ENCODE measurements at regions of chr21 and their contacts with region 1.

Region 1: DNA sequence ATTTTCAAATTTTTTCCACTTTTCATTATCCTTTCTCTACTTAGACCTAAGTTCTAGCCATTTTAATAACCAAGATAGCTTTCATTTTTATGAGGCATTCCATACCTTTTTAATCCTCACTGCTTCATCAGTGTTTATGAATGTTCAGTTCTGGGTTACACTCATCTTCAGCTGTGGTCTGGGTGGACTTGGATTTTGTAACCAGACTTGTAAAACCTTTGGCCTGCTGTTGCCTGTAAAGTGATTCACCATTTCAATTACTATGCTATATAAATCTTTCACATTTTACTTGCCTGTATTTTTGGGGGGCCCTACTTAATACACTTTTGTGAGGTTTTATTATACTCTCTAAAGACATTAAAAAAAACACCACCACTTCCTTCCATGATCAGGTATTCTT is 46.2 kb downstream of the USP25 start:
- DNase-seq: no peak
- ATAC-seq: no peak
- H3K4me3 Mint-ChIP-seq: no peak overlapping the region
- H3K27ac Mint-ChIP-seq: no peak overlapping the region
- H3K4me1 Mint-ChIP-seq: peaks cover 20% of the 10 kb centered on the region
- H3K27me3 Mint-ChIP-seq: no peaks in the 10 kb centered on the region
- CTCF ChIP-seq: no peak

Region 2: GRCh38 chr21:15809818-15810217 is 33.8 kb after region 1 on chr21:
- CTCF ChIA-PET with region 1: no interaction called
- POLR2A ChIA-PET with region 1: no interaction called
- intact Hi-C with region 1: loop called (anchors 5 kb)
- DNase-seq: no peak
- ATAC-seq: no peak
- H3K4me3 Mint-ChIP-seq: no peak overlapping the region
- H3K27ac Mint-ChIP-seq: no peak overlapping the region
- H3K4me1 Mint-ChIP-seq: no peaks in the 10 kb centered on the region
- H3K27me3 Mint-ChIP-seq: no peaks in the 10 kb centered on the region
- CTCF ChIP-seq: no peak